Posterior cingulate gyrus (tissue), 11 donors: ENCODE measurements at regions of chr6 and their contacts with region 1.

Region 1: GRCh38 chr6:124870611-124871459 is 91.4 kb upstream of the RNF217 start:
- DNase-seq: no peak

Region 2: GRCh38 chr6:124590001-124590765 is 280.7 kb before region 1 on chr6:
- intact Hi-C with region 1: no loop called
- DNase-seq: no peak

Region 3: GRCh38 chr6:124780623-124781022 is 90.2 kb before region 1 on chr6:
- intact Hi-C with region 1: no loop called
- DNase-seq: no peak

Region 4: DNA sequence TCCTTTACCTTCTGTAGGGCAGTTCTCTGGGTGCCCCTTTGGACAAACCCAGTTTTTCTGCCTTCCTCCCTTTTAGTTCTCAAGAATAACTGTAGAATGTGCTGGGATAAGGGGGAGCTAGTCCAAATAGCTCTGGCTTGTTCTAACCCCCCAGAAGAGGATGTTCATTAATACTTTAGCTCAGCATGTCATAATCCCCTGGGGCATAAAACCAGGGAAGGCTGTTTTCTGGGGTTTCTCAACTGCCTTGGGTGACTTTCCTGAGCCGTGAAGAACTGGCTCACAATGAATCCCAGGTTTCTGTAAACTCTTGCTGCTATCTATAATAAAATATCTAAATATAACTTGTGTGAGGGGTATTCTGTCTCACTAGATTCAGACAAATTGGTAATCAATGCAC is 46.9 kb after region 1 on chr6:
- intact Hi-C with region 1: no loop called
- DNase-seq: no peak

Region 5: GRCh38 chr6:125114248-125114858 is 243.5 kb after region 1 on chr6:
- intact Hi-C with region 1: loop called (anchors 1 kb)
- DNase-seq: peak in 4 of 10 donors; percentile 31 to 68 (median 62)

Region 6: DNA sequence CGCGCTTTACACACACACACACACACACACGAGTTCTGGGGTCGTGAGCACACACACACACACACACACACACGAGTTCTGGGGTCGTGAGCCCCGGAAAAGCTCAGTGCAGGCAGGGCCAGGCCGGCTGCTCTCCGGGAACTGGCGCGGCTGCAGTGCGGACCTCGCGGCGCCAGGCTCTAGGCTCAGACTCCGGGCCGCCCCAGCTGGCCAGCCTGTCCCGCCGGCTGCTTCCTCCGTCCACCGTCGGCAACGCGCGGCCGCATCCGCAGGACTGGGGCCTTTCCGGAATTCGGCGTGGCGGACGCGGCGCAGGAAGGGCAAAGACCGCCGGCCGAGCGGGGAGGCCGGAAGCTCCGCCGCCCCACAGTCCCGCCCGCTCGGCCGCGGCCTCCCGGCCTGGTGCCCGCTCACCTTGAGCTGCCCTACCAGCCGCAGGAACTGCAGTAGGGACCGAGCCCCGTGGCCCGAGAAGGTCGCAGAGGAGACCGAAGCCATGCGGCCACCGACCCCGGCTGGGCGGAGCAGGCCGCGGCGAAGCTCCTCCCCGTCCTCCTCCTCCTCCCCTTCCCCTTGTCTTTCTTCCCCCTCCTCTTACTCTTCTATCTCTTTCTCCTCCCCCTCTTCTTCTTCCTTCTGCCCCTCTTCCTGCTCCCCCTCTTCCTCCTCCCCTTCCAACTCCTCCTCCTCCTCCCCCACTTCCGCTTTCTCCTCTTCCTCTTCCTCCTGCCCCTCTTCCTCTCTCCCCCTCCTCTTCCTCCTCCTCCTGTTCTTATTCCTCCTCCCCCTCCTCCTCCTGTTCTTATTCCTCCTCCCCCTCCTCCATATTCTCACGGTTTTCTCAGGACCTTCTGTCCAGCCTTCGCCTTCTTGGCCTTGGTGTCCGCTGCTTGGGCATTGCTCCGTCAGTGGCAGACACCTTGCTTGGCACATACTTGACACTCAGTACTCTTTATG is 430.9 kb after region 1 on chr6 and contains the start of gene HDDC2:
- intact Hi-C with region 1: loop called (anchors 10 kb)
- DNase-seq: peak; percentile 35 to 91 (median 53)